ENCODE measurements at regions of chr5 and their contacts with region 1.

Region 1: DNA sequence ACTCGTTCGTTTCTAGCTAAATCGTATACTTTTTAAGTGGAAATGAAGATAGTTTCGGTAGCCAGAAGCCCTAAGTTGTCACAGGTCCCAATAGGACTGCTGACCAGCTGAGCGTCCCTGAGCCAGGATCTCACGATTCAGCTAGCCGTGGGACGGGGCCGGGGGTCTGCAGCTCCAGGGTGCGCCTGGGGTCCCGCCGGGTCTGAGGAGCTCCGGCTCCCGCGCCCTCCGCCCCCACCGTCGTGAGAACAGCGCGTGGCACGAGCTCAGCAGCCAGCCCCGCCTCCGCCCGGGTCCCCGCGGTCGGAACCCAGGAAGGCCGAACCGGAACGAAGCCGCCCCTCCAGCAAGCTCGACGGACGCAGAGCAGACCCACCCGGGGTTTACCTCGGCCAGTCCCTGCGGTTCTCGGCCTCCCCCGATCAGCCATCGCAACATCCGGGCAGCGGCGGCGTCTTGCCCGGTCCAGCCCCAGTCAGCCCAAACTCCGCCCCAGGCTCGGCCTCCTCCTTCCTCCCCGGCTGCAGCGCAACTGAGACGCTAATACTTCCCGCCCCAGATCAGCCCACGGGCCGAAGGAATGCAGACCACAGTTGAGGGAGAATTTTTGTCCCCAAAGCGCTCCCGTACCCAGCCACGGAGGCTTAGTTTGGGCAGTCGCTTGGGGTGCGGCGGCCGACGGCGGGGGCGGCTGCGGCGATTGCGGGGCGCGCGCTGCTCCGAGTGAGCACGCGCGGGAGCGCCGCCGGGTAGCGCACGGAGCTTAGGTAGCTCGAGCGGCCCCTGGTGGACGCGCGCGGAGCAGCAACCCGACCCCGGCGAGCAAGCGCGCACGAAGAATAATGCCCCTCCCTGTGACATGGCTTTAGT is at the start of gene WDR41:
- DNase-seq: peak; percentile 92 to 95
- ATAC-seq: peak; percentile 97 to 98 (median 98)
- H3K4me3 ChIP-seq: peak within 1 kb of the TSS; percentile 57 to 90 (median 78)
- H3K27ac ChIP-seq: peak within 1 kb of the TSS; percentile 82 to 98 (median 95)
- H3K4me1 ChIP-seq: peaks cover 0 to 17% (median 9%) of the 10 kb centered on the region in 9 donors
- H3K27me3 ChIP-seq: peaks cover 0 to 5% (median 0%) of the 10 kb centered on the region in 7 donors
- CTCF ChIP-seq: peak; percentile 92 to 99 (median 95)
- total RNA-seq, gene WDR41: 21.4 to 44.9 (median 34.6) TPM

Region 2: GRCh38 chr5:76874088-76874581 is 617.9 kb before region 1 on chr5:
- intact Hi-C with region 1: loop called in 5 of 10 experiments (anchors 5 to 10 kb)
- DNase-seq: no peak
- ATAC-seq: no peak
- H3K4me3 ChIP-seq: no peak overlapping the region
- H3K27ac ChIP-seq: no peak overlapping the region
- H3K4me1 ChIP-seq: peaks cover 0 to 12% (median 6%) of the 10 kb centered on the region in 9 donors
- H3K27me3 ChIP-seq: no peaks in the 10 kb centered on the region
- CTCF ChIP-seq: no peak

Region 3: GRCh38 chr5:76893294-76893693 is 598.7 kb before region 1 on chr5:
- intact Hi-C with region 1: no loop called
- DNase-seq: no peak
- ATAC-seq: no peak
- H3K4me3 ChIP-seq: no peak overlapping the region
- H3K27ac ChIP-seq: no peak overlapping the region
- H3K4me1 ChIP-seq: no peaks in the 10 kb centered on the region
- H3K27me3 ChIP-seq: peaks cover 0 to 3% (median 0%) of the 10 kb centered on the region in 7 donors
- CTCF ChIP-seq: no peak

Region 4: DNA sequence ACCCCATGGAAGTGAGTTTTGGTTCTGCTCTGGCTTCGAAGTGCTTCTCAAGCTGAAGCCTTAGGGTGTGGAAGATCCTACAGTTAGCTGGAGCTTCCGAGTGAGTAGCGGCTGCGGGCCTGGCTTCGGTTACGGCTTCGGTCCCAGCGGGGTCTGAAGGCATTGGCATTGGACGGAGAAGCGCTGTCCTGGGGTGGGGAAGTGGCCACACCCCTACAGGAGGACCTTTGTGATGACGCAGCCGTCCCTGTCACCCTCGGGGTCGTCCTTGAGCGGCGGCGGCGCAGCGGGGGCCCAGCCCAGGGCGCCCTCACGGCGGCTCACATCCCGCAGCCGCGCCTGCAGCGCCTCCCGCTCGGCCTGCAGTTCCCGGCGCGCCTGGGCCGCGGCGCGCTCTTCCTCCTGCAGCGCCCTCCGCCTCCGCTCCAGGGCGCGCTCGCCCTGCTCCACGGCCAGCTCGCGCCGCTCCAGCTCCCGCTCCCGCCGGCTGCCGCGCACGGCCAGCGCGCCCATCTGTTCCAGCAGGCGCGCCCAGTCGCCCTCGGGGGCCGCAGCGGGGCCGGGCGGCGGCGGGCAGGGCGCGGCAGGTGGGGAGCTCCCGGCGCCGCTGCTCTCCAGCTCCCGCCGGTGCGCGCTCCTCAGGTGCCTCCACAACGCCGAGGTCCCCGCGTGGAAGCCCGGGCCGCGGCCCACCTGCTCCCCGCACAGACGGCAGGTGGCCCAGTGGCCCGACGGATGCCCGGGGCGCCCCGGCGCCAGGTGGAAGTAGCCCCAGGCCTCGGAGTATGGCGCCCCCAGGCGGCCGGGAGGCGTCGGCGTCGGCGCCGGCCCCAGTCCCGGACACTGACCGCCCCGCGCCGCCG is 414.8 kb before region 1 on chr5:
- intact Hi-C with region 1: loop called in 2 of 10 experiments (anchors 10 kb)
- DNase-seq: peak; percentile 67 to 80
- ATAC-seq: peak; percentile 85 to 92 (median 89)
- H3K4me3 ChIP-seq: peak overlapping the region in 9 of 10 donors; percentile 40 to 60 (median 56)
- H3K27ac ChIP-seq: peak overlapping the region in 9 of 10 donors; percentile 40 to 80 (median 62)
- H3K4me1 ChIP-seq: peaks cover 0 to 13% (median 7%) of the 10 kb centered on the region in 9 donors
- H3K27me3 ChIP-seq: no peaks in the 10 kb centered on the region
- CTCF ChIP-seq: peak; percentile 48 to 83 (median 75)

Region 5: DNA sequence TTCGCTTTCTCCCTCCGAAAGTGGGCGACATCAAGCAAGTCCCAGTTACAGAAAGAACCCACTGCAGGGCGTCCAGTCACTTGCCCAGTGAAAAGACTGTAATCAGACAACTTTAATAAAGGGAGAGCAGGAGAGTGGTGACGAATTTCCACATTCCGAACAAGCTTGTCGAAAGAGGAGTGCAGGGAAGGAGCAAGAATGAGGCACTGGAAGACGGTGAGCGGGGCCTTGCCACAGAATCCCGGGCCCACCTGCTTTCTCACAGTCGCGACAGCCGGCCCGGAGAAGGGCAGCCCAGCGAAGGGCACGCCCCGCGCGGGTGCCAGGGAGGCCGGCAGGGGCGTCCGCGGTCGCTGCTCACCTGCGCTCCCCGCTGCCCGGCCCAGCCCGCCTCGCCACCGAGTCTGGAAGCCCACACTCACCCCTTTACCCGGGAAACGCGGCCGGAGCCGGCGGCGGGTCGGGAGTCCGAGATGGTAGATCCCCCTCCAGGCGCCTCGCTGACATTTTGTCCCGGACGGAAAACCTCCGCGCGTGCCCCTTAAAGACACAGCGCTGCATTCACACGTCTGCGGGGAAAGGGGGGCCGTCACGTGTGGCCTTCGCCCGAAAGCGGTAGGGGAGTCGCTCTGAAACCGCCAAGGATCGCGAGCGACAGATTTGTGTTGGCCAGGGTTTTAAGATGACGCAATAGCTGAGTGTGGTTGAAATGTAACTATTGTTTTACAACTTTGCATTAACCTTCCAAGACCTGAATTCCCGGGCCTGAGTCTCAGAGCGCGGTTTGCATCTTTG is 405.1 kb before region 1 on chr5 and contains the start of gene ZBED3:
- intact Hi-C with region 1: loop called in 3 of 10 experiments (anchors 2 to 10 kb)
- DNase-seq: peak; percentile 63 to 64
- ATAC-seq: peak; percentile 76 to 88 (median 81)
- H3K4me3 ChIP-seq: peak within 1 kb of the TSS; percentile 66 to 98 (median 82)
- H3K27ac ChIP-seq: peak within 1 kb of the TSS; percentile 86 to 98 (median 90)
- H3K4me1 ChIP-seq: peaks cover 2 to 21% (median 16%) of the 10 kb centered on the region in 9 donors
- H3K27me3 ChIP-seq: no peaks in the 10 kb centered on the region
- CTCF ChIP-seq: peak in 5 of 9 donors; percentile 5 to 30 (median 21)
- total RNA-seq, gene ZBED3: 4.8 to 8.9 (median 6.5) TPM

Region 6: DNA sequence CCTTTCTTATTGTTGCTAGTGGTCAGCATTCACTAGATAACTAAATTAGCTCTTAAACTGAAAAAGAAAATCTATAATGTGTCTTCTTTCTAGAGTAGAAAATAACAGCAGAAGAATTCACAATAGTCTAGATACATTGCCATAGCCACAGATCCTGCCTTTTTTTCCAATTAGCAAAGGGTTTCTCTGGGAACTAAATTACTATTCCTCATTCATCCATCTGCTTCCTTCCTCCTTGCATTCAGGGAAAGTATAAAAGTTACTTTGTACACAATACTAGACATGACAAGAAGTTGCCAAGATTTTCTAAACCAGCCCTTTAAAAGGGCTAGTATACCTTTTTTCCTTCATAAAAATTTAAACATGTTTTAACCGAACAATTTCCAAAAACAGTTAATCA is 21.3 kb after region 1 on chr5:
- intact Hi-C with region 1: no loop called
- DNase-seq: no peak
- ATAC-seq: no peak
- H3K4me3 ChIP-seq: no peak overlapping the region
- H3K27ac ChIP-seq: no peak overlapping the region
- H3K4me1 ChIP-seq: no peaks in the 10 kb centered on the region
- H3K27me3 ChIP-seq: peaks cover 0 to 29% (median 0%) of the 10 kb centered on the region in 7 donors
- CTCF ChIP-seq: no peak